Activated CD4-positive, alpha-beta memory T cell treated with anti-CD3 and anti-CD28 coated beads for 36 hours (primary cell): ENCODE measurements at regions of chr10 and their contacts with region 1.

Region 1: DNA sequence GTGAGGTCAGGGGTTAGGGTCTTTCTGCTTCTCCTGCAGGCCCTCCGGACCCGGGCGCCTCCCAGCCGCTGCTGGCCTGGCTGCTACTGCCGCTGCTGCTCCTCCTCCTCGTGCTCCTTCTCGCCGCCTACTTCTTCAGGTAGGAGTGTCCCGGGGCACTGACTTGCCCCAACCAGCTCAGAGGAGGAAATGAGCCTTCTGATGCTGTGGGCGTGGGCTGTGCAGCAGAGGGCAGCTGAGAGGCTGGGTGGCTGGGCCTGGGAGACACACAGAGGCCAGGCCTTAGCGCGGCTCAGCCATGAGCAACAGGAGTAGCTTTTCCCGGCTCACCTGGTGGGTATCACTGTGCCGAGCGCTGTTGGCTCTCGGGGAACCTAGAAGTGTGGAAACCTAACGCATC is 78.9 kb downstream of the MKI67 start:
- DNase-seq: peak; percentile 93
- H3K4me3 Mint-ChIP-seq: peak overlapping the region; percentile 93
- H3K27ac Mint-ChIP-seq: peak overlapping the region; percentile 99
- H3K4me1 Mint-ChIP-seq: peaks cover 54% of the 10 kb centered on the region
- H3K27me3 Mint-ChIP-seq: no peaks in the 10 kb centered on the region

Region 2: DNA sequence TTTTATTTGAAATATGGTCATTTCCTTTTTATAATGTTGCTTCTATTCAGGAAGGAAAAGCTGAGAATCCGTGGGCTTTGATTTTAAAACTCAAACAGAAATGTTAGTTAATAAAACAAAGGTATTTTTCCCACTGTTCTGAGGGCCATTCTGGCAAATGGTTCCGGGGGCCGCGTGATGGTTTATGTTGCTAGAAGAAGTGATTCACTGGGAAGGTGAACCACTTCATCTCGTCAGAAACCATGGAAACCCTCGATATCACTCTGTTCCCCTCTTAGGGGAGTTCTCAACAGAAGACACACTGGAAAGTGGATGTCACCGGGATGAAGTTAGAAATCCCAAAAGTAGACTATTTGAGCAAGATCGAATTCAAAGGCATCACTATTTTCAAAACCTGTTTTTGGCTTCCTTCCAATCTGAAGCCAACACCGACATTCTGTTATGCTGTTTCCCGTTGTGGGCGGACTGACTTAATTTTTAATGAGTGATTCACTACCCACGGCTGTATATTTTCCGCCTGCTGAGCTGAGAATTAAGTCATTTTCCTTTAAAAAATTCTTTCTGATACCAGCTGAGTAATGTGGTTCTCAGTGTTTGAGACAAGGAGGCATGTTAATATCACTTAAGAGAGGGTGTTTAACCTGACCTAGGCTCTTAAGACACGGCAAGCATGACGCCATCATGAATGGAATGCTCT is 56.4 kb before region 1 on chr10:
- CTCF ChIA-PET with region 1: interaction called, 4 read pairs
- POLR2A ChIA-PET with region 1: interaction called, 13 read pairs
- intact Hi-C with region 1: loop called (anchors 1 kb)
- DNase-seq: peak; percentile 80
- H3K4me3 Mint-ChIP-seq: peak overlapping the region; percentile 54
- H3K27ac Mint-ChIP-seq: peak overlapping the region; percentile 92
- H3K4me1 Mint-ChIP-seq: peaks cover 56% of the 10 kb centered on the region
- H3K27me3 Mint-ChIP-seq: peaks cover 2% of the 10 kb centered on the region

Region 3: GRCh38 chr10:128035557-128035973 is 11.8 kb before region 1 on chr10:
- CTCF ChIA-PET with region 1: interaction called, 83 read pairs
- POLR2A ChIA-PET with region 1: interaction called, 3 read pairs
- intact Hi-C with region 1: loop called (anchors 1 kb)
- DNase-seq: peak; percentile 78
- H3K4me3 Mint-ChIP-seq: no peak overlapping the region
- H3K27ac Mint-ChIP-seq: no peak overlapping the region
- H3K4me1 Mint-ChIP-seq: peaks cover 9% of the 10 kb centered on the region
- H3K27me3 Mint-ChIP-seq: no peaks in the 10 kb centered on the region

Region 4: DNA sequence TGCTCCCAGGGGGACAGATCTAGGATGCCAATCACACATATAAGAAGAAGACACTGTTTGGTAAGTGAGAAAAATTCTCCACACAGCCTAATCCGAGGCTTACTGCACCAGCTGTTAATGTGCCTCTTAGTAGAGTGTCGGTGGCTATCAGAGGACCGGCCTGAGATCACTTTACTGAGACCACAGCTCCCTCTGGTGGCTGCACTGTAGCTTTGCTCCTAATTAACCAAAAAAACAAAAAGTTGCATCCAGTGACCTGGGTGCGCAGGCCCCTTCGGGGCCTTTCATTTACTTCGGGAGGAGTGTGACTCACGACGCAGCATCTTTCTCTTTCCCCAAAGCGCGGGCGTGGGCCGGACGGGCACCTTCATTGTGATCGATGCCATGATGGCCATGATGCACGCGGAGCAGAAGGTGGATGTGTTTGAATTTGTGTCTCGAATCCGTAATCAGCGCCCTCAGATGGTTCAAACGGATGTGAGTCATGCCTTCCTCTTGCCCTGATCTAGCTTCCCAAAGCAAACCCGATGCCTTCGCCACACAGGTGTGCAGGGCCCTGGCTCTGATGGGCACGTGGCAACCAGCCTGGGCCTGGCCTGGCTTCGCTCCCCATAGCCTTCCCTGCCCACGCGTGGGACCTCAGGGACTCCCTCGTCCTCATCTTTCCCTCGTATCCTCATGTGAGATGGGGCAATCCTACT is 22.1 kb after region 1 on chr10:
- CTCF ChIA-PET with region 1: interaction called, 60 read pairs
- POLR2A ChIA-PET with region 1: interaction called, 135 read pairs
- intact Hi-C with region 1: loop called (anchors 1 kb)
- DNase-seq: peak; percentile 86
- H3K4me3 Mint-ChIP-seq: no peak overlapping the region
- H3K27ac Mint-ChIP-seq: no peak overlapping the region
- H3K4me1 Mint-ChIP-seq: peaks cover 35% of the 10 kb centered on the region
- H3K27me3 Mint-ChIP-seq: no peaks in the 10 kb centered on the region

Region 5: DNA sequence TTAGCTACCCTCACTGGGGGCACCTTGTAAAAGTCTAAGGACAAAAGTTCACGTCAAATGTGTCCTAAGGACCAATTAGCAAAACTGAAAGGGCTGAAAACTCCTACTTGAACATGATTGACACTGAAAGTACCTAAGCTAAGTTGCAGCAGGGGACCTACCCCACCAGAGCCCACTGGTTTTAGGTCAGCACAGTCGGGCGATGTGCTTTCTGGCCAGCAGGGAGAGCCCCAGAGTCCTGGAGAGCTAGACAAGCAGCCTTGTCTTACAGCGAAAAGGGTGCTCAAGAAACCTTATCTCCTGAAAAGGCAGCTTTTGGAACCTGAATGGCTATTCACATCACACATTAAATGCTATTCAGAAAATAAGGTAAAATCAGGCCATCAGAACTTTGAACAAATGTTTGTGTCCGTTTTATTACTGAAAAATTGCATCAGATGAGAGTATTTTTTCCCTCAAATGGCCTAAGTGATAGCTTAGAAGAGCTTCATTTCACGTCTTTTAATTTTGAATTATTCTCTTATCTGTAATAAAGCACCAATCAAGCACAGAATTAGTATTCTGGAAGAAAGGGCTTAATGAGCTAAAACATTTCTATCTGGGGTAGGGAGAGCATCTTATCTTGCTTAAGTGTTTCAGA is 131.1 kb after region 1 on chr10:
- CTCF ChIA-PET with region 1: interaction called, 3 read pairs
- POLR2A ChIA-PET with region 1: interaction called, 3 read pairs
- intact Hi-C with region 1: loop called (anchors 1 kb)
- DNase-seq: peak; percentile 76
- H3K4me3 Mint-ChIP-seq: no peak overlapping the region
- H3K27ac Mint-ChIP-seq: no peak overlapping the region
- H3K4me1 Mint-ChIP-seq: peaks cover 33% of the 10 kb centered on the region
- H3K27me3 Mint-ChIP-seq: no peaks in the 10 kb centered on the region